Pancreas (tissue), 10 donors: ENCODE measurements at regions of chr7 and their contacts with region 1.

Region 1: DNA sequence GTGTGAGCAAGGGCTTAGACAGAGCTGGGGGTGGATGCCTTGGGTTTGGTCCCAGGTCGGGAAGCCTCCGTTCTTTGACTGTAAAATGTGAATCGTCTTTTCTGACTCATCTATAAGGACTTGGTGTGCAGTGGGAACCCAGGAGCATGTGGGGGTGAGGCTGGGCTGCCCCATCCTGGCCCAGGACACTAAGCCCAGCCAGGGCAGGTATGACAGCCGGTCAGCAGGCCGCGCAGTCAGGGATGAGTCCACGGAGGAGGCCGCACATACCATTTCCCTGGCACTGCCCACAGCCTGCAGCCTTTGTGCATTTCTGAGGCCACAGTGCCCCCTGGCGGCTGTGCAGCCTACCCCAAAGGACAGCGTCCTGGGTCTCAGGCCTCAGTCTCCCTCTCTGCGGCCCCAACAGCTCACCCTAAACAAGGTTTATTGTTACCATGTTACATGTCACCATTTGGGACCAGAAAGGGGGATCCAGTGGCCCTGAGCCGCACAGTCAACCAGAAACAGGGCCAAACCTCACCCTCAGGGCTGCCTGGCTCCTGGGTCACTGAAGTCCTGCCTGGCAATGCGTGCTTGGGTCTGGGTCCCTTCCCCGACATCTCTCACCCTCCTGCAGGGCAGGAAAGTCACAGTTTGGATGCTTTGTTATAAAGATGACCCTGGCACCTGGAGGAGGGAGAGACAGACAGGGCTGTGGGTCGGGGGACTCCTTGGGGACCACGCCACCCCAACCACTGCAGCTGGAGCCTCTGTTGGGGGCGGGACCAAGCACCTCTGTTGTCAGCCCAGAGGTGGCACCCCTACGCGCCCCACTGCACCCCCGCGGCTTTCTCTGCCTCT is 14.4 kb upstream of the SH2B2 start:
- DNase-seq: peak; percentile 55 to 95 (median 80)
- ATAC-seq: peak; percentile 89 to 97 (median 93)
- H3K4me3 ChIP-seq: no peak overlapping the region
- H3K27ac ChIP-seq: no peak overlapping the region
- H3K4me1 ChIP-seq: no peaks in the 10 kb centered on the region
- H3K27me3 ChIP-seq: no peaks in the 10 kb centered on the region
- CTCF ChIP-seq: peak; percentile 77 to 90 (median 86)

Region 2: GRCh38 chr7:101542527-101543241 is 729.6 kb before region 1 on chr7:
- intact Hi-C with region 1: loop called in 2 of 3 experiments (anchors 2 to 5 kb)
- DNase-seq: peak; percentile 39 to 91 (median 79)
- ATAC-seq: peak in 3 of 4 donors; percentile 80 to 87 (median 82)
- H3K4me3 ChIP-seq: no peak overlapping the region
- H3K27ac ChIP-seq: no peak overlapping the region
- H3K4me1 ChIP-seq: no peaks in the 10 kb centered on the region
- H3K27me3 ChIP-seq: no peaks in the 10 kb centered on the region
- CTCF ChIP-seq: peak; percentile 67 to 93 (median 85)

Region 3: DNA sequence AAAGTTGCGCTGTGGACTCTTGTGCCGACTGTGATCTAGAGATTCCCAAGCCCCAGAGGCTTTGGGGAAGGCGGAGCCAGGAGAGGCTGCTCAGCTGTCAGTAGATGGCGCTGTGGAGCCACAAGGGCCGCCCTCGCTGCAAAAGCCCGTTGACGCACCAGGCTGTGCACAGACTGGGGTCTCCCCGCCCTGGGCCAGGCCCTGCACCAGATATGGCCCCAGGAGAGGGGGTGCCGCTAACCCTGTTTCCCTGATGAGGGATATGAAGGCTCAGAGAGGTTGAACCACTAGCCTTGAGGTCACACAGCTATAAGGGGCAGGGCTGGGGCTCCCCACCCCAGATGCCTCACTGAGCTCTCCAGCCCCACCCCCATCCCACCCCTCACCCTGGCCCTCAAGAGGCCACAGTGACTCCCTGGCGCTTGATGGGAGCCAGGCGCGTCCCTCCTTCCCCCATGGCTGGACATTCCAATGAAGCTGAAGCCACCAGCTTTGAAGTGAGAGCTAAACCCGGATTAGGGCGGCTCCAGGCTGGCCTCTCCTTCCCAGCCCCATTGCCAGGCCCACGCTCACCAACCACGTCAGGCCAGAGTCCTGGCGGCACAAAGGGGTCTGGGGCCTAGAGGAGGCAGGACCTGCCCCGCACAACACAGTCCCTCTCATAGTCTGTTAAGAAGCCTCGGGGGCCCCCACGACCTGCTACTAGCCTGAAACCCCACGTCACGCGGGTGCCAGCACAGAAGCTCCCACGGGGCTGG is 669.6 kb before region 1 on chr7:
- intact Hi-C with region 1: loop called in 1 of 3 experiments (anchors 5 kb)
- DNase-seq: peak; percentile 50 to 92 (median 76)
- ATAC-seq: peak; percentile 65 to 89 (median 86)
- H3K4me3 ChIP-seq: no peak overlapping the region
- H3K27ac ChIP-seq: no peak overlapping the region
- H3K4me1 ChIP-seq: no peaks in the 10 kb centered on the region
- H3K27me3 ChIP-seq: no peaks in the 10 kb centered on the region
- CTCF ChIP-seq: peak; percentile 74 to 96 (median 88)